Dendritic cell treated with granulocyte-macrophage colony-stimulating factor and Interleukin-4, amounts not matched to agents 40 ng/mL and 50 ng/mL, for 4 days (primary cell): ENCODE measurements at regions of chr2 and their contacts with region 1.

Region 1: DNA sequence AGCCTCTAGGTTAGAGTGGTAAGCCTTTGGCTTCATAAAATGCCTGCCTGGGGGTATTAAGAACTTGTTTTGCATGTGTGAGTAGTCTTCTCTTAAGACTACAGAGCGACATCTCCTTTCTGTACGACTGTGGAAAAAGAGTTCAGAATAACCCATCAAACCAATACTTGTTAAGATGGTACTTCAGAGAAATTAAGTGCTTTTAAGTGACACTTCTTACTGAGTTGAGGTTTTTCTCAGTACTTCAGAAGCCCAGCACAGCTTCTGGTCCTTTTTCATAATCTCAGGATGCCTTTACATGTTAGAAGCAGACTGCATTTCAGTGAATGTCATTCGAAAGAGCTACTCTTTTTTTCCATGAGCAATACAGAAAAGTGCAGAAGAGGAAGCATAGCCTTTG is 10.8 kb downstream of the XRCC5 start:
- H3K4me3 Mint-ChIP-seq: no peak overlapping the region
- H3K27ac Mint-ChIP-seq: peak overlapping the region; percentile 34
- H3K4me1 Mint-ChIP-seq: peaks cover 40% of the 10 kb centered on the region
- H3K27me3 Mint-ChIP-seq: no peaks in the 10 kb centered on the region

Region 2: GRCh38 chr2:216159144-216159543 is 39.2 kb after region 1 on chr2:
- intact Hi-C with region 1: loop called (anchors 5 kb)
- H3K4me3 Mint-ChIP-seq: no peak overlapping the region
- H3K27ac Mint-ChIP-seq: no peak overlapping the region
- H3K4me1 Mint-ChIP-seq: no peaks in the 10 kb centered on the region
- H3K27me3 Mint-ChIP-seq: no peaks in the 10 kb centered on the region